ENCODE measurements at regions of chr17 and their contacts with region 1.

Region 1: DNA sequence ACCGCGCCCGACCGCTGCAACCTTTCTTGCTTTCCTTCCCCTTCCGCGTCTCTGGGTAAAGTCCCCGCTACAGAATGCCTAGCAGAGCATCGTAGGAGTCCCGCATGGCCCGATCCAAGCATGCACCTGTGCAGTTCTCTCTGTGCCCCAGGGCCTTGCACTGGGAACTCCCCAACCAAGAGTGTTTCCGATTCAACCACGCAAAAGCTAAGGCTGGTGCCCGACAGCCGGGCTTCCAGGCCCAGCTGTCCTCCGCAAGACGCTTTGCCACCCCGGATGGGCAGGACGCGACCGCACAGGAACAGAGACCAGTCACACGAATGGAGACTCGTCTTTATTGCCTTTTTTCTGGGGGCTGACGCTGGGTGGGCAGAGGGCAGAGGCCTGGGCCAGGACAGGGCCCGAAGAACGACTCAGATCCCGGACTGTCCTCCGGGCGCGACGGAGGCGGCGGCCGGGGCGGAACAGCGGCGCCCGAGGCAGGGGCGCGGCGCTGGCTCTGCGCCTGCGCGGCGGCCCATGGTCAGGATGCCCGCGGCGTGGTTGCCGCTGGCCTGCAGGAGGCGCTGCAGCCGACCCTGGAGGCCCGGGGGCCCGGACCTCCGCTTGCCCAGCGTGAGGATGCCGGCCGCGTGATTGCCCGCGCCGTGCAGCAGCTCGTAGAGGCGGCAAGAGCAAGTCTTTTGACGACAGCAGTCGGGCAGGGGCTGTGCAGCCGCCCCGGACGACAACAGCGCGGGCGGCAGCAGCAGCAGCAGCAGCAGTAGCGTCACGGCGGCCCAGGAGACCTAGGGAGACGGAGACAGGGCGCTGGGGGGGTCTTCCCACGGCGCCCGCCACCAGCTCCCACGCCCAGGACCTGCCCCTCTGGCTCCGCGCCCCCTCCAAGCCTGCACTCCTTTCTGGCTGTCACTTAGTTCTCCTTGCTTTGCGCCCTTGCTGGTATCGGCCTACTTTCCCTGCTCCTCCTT is 1.2 kb downstream of the HCRT start:
- DNase-seq: no peak
- H3K4me3 ChIP-seq: peak overlapping the region; percentile 46
- H3K27me3 ChIP-seq: peaks cover 21% of the 10 kb centered on the region
- CTCF ChIP-seq: peak; percentile 59

Region 2: GRCh38 chr17:42193969-42194899 is 10.2 kb after region 1 on chr17 and contains the start of gene GHDC:
- CTCF ChIA-PET with region 1: interaction called, 35 read pairs
- POLR2A ChIA-PET with region 1: no interaction called
- DNase-seq: peak; percentile 28
- H3K4me3 ChIP-seq: peak within 1 kb of the TSS; percentile 65
- H3K27me3 ChIP-seq: no peaks in the 10 kb centered on the region
- CTCF ChIP-seq: no peak
- polyA plus RNA-seq, gene GHDC: 9.0 and 16.5 TPM in 2 replicates

Region 3: DNA sequence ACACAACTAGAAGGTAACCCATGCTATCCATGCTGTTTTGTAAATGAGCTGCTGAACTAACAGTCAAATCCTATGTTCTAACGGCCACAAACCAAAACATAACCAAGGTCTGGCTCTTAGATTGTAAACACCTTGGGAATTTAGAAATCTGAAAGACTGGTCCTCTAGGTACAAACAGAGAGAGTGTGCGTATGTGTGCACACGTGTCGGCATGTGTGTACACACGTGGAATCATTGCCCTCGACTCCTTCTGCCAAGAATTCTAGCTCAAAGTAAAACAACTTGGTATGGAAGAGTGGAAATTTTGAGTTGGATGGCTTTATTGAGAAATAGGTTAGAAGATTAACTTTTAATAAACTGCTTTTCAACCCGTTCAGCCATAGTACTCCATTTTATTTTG is 28.4 kb after region 1 on chr17:
- CTCF ChIA-PET with region 1: no interaction called
- POLR2A ChIA-PET with region 1: no interaction called
- DNase-seq: no peak
- H3K4me3 ChIP-seq: no peak overlapping the region
- H3K27me3 ChIP-seq: no peaks in the 10 kb centered on the region
- CTCF ChIP-seq: no peak